ENCODE measurements at regions of chr10 and their contacts with region 1.

Region 1: GRCh38 chr10:102151774-102152544 is at the start of gene NOLC1:
- DNase-seq: peak; percentile 100
- H3K4me3 Mint-ChIP-seq: peak within 1 kb of the TSS; percentile 99
- H3K27ac Mint-ChIP-seq: peak within 1 kb of the TSS; percentile 99
- H3K4me1 Mint-ChIP-seq: peaks cover 45% of the 10 kb centered on the region
- H3K27me3 Mint-ChIP-seq: peaks cover 2% of the 10 kb centered on the region
- total RNA-seq, gene NOLC1: 268 and 281 TPM in 2 replicates

Region 2: DNA sequence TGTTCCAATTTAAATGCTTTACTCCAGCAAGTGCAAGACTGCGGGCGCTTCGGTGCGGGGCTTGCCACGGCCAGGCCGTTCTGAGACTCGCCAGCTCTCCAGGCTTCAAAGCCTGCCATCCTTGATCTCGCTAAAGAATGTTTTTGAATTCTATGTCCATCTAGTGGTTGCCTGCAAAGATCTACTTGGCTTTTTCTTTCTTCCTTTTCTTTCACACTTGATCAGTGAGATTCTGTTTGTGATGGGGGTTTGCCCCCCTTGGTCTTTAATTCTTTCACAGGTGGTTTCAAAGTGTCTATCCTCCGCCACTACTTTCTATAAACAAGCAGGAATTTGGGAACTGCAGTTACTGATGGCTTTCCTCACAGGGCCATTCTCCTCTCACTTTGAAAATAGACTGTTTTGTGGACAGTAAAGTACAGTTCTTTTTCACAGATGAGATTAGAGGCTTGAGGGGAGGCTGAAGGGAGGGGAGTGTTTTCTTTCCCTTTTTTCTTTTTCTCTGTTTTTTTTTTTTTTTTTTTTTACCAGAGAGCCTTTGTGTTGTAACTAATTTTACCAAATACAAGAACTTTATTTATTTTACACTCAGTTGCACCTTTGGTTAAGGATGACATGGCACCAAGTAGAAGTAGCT is 441.8 kb before region 1 on chr10:
- intact Hi-C with region 1: no loop called
- DNase-seq: no peak
- H3K4me3 Mint-ChIP-seq: no peak overlapping the region
- H3K27ac Mint-ChIP-seq: no peak overlapping the region
- H3K4me1 Mint-ChIP-seq: peaks cover 11% of the 10 kb centered on the region
- H3K27me3 Mint-ChIP-seq: peaks cover 61% of the 10 kb centered on the region

Region 3: GRCh38 chr10:102064868-102065560 is 86.9 kb before region 1 on chr10 and contains the start of gene HPS6:
- intact Hi-C with region 1: loop called (anchors 2 kb)
- DNase-seq: peak; percentile 97
- H3K4me3 Mint-ChIP-seq: peak within 1 kb of the TSS; percentile 87
- H3K27ac Mint-ChIP-seq: peak within 1 kb of the TSS; percentile 94
- H3K4me1 Mint-ChIP-seq: peaks cover 23% of the 10 kb centered on the region
- H3K27me3 Mint-ChIP-seq: no peaks in the 10 kb centered on the region
- total RNA-seq, gene HPS6: 22.7 and 25.8 TPM in 2 replicates

Region 4: GRCh38 chr10:102114861-102115618 is 36.9 kb before region 1 on chr10:
- intact Hi-C with region 1: loop called (anchors 1 kb)
- DNase-seq: peak; percentile 94
- H3K4me3 Mint-ChIP-seq: peak overlapping the region; percentile 94
- H3K27ac Mint-ChIP-seq: peak overlapping the region; percentile 98
- H3K4me1 Mint-ChIP-seq: peaks cover 53% of the 10 kb centered on the region
- H3K27me3 Mint-ChIP-seq: no peaks in the 10 kb centered on the region

Region 5: GRCh38 chr10:102167861-102168260 is 15.9 kb after region 1 on chr10:
- intact Hi-C with region 1: loop called (anchors 1 kb)
- DNase-seq: no peak
- H3K4me3 Mint-ChIP-seq: no peak overlapping the region
- H3K27ac Mint-ChIP-seq: no peak overlapping the region
- H3K4me1 Mint-ChIP-seq: peaks cover 8% of the 10 kb centered on the region
- H3K27me3 Mint-ChIP-seq: peaks cover 2% of the 10 kb centered on the region

Region 6: DNA sequence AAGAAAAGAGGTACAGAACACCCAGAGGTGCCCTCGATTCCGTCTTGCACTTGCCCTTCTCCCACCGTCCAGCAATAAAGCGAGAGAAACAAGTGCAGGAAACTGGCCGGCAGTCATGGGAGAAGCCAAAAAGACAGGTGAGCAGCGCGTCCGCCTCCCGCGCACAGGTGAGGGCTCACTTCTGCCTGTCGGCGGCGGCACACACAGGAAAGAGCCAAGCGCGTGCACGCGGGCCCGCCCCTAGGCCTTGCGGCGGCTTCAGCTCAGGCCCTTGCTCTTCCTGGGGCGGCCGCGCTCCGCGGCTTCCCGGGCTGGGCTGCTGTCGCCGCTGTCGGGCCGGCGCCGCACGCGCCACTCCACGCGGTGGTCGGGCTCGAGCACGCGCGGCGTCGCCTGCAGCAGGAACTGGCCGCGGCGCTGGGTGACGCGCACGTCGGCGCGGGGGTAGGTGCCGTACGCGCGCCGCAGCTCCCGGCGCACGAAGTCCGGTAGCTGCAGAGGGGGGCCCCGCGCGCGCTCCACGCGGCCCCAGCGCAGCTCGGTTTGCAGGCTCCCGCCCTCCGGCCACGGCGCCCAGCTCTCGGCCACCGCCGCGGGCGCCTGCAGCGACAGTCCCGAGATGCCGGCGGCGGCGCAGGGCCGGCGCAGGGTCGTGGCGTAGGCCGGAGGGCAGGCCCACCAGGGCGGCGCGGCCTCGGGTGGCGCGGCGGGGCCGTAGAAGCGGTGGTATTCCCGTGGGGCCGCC is 298.4 kb after region 1 on chr10:
- intact Hi-C with region 1: loop called (anchors 5 kb)
- DNase-seq: peak; percentile 97
- H3K4me3 Mint-ChIP-seq: peak overlapping the region; percentile 98
- H3K27ac Mint-ChIP-seq: peak overlapping the region; percentile 97
- H3K4me1 Mint-ChIP-seq: peaks cover 29% of the 10 kb centered on the region
- H3K27me3 Mint-ChIP-seq: no peaks in the 10 kb centered on the region